Activated CD4-positive, alpha-beta T cell treated with anti-CD3 and anti-CD28 coated beads, Interleukin-2, amount 10 ng/mL, durations not matched to agents 7 days and 5 days (primary cell): ENCODE measurements at regions of chr7 and their contacts with region 1.

Region 1: DNA sequence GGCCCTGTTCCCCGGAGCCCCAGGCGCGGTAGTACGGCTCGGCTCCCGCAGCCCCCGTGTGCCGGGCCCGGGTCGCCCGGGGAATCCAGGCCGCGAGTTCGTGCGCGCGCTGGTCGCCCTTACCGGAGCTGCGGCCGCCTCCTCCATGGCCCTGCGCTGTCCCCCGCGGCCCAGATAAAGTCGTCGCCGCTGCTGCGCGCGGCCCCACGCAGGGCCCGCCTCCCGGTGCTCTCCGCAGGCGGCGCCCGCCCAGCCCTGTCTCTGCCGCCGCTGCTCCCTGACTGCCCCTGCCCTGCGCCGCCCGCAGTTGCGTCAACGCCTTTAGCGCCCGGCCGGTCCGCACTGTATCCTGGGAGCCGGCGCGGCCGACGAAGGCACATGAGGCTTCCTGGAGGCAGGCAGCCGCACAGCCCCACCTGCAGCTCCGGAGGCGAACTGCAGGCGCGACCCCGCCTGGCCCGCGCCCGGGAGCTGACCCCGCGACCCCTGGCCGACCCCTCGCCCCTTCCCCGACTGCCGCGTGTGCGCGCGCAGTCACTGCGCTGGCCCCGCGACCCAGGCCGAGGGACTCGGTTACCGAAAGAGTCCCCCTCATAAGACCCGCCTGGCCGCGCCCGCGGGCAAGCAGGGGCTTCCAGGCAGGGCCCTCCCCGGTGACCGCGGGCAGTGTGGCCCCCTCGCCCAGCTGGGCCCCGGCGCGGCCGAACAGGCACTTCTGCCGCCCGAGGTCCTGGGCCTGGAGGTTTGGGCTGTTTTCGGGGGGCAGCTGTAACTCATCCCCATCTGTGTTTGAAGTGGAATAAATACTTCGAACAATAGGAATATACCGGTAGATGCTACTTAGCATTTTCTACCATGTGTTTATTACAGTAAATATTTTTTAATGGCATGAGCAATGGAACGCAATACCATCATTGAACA is 127.1 kb upstream of the ZNF746 start:
- DNase-seq: peak; percentile 91
- H3K4me3 Mint-ChIP-seq: peak overlapping the region; percentile 90
- H3K27ac Mint-ChIP-seq: peak overlapping the region; percentile 93
- H3K4me1 Mint-ChIP-seq: peaks cover 40% of the 10 kb centered on the region
- H3K27me3 Mint-ChIP-seq: peaks cover 13% of the 10 kb centered on the region

Region 2: DNA sequence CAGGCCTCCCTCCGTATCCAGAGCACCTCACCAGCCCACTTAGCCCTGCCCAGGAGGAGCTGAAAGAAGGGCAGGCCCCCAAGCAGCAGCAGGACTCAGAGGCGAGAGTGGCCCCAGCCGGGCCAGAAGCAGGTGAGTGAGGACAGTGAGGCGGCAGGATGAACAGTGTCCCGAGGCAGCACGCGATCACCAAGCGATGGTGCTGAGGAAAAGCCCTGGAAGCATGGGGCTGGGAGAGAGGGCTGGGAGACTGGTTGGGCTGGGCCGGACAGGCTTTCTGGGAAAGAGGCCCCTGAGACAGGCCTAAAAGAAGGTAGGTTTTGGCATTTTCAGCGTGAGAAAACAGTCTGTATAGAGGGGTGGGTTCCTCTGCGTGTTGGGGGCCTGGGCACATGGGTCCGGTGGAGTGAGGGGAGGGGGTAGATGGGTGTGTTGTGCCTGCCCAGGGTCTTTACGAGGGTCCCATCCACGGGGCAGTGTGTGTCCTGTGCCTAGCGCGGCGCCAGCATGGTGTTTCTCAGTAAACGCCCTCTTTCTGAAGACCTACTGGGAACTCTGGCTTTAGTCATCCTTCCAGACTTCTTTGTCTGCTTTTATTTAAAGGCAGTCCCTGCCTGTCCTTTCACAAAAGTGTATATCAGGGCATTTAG is 346.2 kb before region 1 on chr7:
- CTCF ChIA-PET with region 1: no interaction called
- POLR2A ChIA-PET with region 1: no interaction called
- DNase-seq: no peak
- H3K4me3 Mint-ChIP-seq: no peak overlapping the region
- H3K27ac Mint-ChIP-seq: peak overlapping the region; percentile 62
- H3K4me1 Mint-ChIP-seq: peaks cover 8% of the 10 kb centered on the region
- H3K27me3 Mint-ChIP-seq: no peaks in the 10 kb centered on the region

Region 3: DNA sequence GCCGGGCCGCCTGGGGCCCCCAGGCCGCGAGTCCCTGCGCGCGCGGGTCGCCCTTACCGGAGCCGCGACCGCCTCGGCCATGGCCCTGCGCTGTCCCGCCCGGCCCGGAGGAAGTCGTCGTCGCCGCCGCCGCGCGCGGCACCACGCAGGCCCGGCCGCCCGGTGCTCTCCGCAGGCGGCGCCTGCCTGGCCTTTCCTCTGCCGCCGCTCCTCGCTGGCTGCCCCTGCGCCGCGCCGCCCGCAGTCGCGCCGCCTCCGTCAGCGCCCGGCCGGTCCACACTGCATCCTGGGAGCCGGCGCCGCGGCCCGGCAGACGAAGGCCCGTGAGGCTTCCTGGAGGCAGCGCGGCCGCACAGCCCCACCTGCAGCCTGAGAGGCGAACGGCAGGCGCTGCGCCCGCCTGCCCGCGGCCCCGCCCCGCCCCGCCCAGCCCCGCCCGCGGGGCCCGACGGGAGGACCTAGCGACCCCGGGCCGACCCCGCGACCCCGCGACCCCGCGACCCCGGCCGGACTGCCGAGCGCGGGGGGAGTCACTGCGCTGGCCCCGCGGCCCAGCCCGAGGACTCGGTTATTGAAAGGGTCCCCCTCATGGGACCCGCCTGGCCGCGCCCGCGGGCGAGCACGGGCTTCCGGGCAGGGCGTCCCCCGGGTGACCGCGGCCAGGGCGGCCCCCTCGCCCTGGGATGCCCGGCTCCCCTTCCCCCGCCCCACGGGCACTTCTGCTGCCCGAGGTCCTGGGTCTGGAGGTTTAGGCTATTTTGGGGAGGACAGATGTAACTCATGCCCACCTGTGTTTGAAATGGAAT is 127.0 kb before region 1 on chr7 and contains the start of gene ZNF746:
- CTCF ChIA-PET with region 1: interaction called, 14 read pairs
- POLR2A ChIA-PET with region 1: no interaction called
- DNase-seq: peak; percentile 82
- H3K4me3 Mint-ChIP-seq: peak within 1 kb of the TSS; percentile 97
- H3K27ac Mint-ChIP-seq: peak within 1 kb of the TSS; percentile 97
- H3K4me1 Mint-ChIP-seq: peaks cover 46% of the 10 kb centered on the region
- H3K27me3 Mint-ChIP-seq: peaks cover 3% of the 10 kb centered on the region
- total RNA-seq, gene ZNF746: 21.0 to 21.9 TPM

Region 4: DNA sequence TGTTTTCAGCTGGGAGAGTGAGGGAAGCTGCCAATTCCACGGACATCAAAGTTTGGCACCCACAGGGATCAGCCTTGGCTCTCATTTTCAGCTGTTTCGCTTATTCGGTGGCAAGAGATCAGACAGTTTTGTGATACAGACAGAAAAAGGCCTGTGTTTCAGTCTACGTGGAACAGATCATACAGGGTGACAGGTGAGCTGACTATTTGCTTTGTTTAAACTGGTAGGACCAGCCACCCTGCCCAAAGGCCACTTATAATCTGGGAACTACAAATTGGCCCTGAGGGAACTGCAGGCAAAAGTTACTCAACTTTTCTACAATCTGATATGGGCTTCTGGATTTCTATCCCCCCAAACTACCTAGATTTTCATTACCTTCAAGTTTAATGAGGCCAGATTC is 20.1 kb after region 1 on chr7:
- CTCF ChIA-PET with region 1: no interaction called
- POLR2A ChIA-PET with region 1: no interaction called
- DNase-seq: no peak
- H3K4me3 Mint-ChIP-seq: no peak overlapping the region
- H3K27ac Mint-ChIP-seq: no peak overlapping the region
- H3K4me1 Mint-ChIP-seq: no peaks in the 10 kb centered on the region
- H3K27me3 Mint-ChIP-seq: peaks cover 24% of the 10 kb centered on the region